MCF 10A (cell line): ENCODE measurements at regions of chr10 and their contacts with region 1.

Region 1: DNA sequence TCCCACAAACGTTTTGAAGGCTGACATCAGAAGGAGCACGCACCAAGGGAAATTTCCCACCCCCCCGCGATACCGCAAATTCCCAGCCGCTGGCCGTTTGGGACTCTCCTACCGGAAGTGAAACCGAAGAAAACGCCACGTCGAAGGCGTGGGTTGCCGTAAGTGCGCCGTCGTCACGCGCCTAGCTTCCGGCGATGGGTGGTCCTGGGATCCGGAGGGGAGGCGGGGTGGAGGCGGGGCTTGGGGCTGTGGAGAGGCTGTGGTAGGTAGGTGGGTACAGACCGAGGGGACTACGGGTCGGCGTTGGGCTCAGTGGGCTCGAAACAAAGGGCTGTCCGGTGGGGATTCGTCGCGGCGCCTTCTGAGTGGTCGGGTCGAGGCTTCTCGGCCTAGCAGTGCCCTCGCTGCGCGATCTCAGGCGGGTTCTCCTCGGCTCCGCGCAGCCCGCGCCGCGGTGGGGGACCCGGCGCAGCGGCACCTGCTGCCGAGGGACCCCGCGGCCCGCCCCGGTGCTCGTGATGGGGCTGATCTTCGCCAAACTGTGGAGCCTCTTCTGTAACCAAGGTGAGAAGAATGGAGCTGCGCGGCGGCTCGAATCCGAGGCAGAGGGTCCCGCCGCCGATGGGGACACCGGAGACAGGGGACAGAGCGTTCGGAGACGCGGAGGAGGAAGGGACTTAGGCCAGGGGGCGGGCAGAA is at the start of gene ARL5B:
- DNase-seq: peak; percentile 98
- H3K4me3 Mint-ChIP-seq: peak within 1 kb of the TSS; percentile 85
- H3K27ac Mint-ChIP-seq: peak within 1 kb of the TSS; percentile 97
- H3K4me1 Mint-ChIP-seq: peaks cover 12% of the 10 kb centered on the region
- H3K27me3 Mint-ChIP-seq: no peaks in the 10 kb centered on the region
- CTCF ChIP-seq: no peak
- total RNA-seq, gene ARL5B: 22.0 and 23.1 TPM in 2 replicates

Region 2: GRCh38 chr10:18594574-18595156 is 64.6 kb before region 1 on chr10:
- CTCF ChIA-PET with region 1: no interaction called
- POLR2A ChIA-PET with region 1: no interaction called
- intact Hi-C with region 1: no loop called
- DNase-seq: peak; percentile 11
- H3K4me3 Mint-ChIP-seq: no peak overlapping the region
- H3K27ac Mint-ChIP-seq: no peak overlapping the region
- H3K4me1 Mint-ChIP-seq: no peaks in the 10 kb centered on the region
- H3K27me3 Mint-ChIP-seq: no peaks in the 10 kb centered on the region
- CTCF ChIP-seq: no peak

Region 3: DNA sequence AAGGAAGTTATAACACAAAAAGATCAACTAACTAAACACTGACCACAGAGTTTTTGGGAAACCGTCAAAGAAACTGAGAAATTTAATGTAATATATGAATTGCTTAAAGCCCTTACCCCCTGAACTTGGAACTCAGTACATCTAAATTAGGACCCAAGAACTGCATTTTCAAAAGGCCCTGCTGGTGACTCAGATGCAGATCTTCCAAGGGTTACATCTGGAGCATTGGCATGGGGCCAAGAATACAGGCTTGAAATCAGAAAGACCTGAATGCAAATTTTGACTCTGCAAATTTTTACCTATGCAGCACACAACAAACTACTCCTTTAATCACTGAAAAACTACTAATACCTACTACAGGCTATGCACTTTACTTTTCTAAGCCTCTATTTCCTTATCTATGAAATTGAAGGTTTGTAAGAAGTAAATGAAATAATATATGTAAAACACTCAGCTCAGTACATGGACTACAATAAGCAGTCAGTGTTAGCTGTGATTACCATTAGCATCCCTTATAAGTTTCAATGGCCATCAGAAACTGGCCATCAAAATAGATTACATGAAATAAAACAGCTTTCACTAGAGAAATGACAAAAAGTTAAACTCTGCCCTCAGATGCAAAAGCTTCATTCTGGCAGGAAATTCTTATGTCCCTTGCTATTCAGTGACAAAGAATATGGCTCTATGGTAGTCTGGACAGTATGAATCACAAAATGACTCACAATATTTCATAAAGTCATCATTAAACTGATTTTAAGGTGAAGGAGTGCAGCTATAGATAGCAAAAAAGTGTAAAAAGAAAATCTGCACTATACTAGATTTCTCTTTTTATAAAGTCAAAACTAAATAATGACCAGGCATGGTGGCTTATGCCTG is 51.5 kb before region 1 on chr10:
- CTCF ChIA-PET with region 1: no interaction called
- POLR2A ChIA-PET with region 1: interaction called, 11 read pairs
- intact Hi-C with region 1: no loop called
- DNase-seq: peak; percentile 93
- H3K4me3 Mint-ChIP-seq: no peak overlapping the region
- H3K27ac Mint-ChIP-seq: peak overlapping the region; percentile 75
- H3K4me1 Mint-ChIP-seq: peaks cover 24% of the 10 kb centered on the region
- H3K27me3 Mint-ChIP-seq: no peaks in the 10 kb centered on the region
- CTCF ChIP-seq: no peak

Region 4: DNA sequence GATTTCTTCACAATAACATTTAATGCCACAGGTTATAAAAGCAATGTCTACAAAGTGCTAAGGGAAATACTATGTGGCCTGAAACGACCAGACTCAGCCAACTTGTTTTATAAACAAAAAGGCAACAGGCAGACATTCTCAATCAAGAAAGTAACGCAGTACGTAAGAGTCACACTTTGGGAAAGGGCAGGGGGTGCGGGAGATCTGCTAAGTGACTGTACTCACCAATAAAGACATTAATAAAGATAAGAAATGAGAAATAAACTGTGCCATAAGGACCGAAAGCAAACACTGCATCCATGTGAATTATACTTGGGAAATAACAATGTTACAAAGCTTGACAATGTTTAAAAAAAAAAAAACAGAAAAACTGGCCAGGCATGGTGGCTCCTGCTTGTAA is 33.4 kb before region 1 on chr10:
- CTCF ChIA-PET with region 1: no interaction called
- POLR2A ChIA-PET with region 1: interaction called, 19 read pairs
- intact Hi-C with region 1: no loop called
- DNase-seq: no peak
- H3K4me3 Mint-ChIP-seq: no peak overlapping the region
- H3K27ac Mint-ChIP-seq: no peak overlapping the region
- H3K4me1 Mint-ChIP-seq: peaks cover 5% of the 10 kb centered on the region
- H3K27me3 Mint-ChIP-seq: no peaks in the 10 kb centered on the region
- CTCF ChIP-seq: no peak

Region 5: DNA sequence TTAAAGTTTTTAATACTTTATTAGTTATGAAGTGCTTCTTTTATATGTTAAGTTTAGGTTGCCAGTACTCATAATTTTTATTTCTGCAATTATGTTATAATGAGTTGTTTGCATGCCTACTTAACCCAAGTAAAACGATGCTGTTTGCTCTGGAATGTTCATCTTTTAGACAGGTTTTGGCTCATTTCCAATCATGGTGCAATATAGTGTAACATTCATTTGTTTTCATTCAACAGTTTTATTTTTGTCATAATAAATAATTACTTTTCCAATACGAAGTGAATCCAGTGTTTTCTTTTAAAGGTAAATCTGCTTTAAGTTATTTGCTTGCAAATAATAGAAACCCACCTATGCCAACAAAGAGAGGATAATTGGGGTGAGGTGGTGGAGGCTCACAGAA is 22.1 kb after region 1 on chr10:
- CTCF ChIA-PET with region 1: no interaction called
- POLR2A ChIA-PET with region 1: interaction called, 12 read pairs
- intact Hi-C with region 1: no loop called
- DNase-seq: peak; percentile 58
- H3K4me3 Mint-ChIP-seq: peak overlapping the region; percentile 71
- H3K27ac Mint-ChIP-seq: peak overlapping the region; percentile 90
- H3K4me1 Mint-ChIP-seq: peaks cover 34% of the 10 kb centered on the region
- H3K27me3 Mint-ChIP-seq: no peaks in the 10 kb centered on the region
- CTCF ChIP-seq: no peak